ENCODE measurements at regions of chr9 and their contacts with region 1.

Region 1: GRCh38 chr9:21677834-21678233 is 124.6 kb upstream of the MTAP start:
- DNase-seq: peak; percentile 99
- ATAC-seq: peak; percentile 76
- H3K4me3 ChIP-seq: no peak overlapping the region
- H3K27ac ChIP-seq: peak overlapping the region; percentile 99
- H3K4me1 ChIP-seq: peaks cover 90 to 99% of the 10 kb centered on the region in 2 experiments
- H3K27me3 ChIP-seq: no peaks in the 10 kb centered on the region
- CTCF ChIP-seq: 0 out of 6 replicates have a peak, but pooled peaks of 1 of the 3 experiments have one; percentile 4
- POLR2A ChIP-seq: no peak
- RAD21 ChIP-seq: peak; percentile 48

Region 2: DNA sequence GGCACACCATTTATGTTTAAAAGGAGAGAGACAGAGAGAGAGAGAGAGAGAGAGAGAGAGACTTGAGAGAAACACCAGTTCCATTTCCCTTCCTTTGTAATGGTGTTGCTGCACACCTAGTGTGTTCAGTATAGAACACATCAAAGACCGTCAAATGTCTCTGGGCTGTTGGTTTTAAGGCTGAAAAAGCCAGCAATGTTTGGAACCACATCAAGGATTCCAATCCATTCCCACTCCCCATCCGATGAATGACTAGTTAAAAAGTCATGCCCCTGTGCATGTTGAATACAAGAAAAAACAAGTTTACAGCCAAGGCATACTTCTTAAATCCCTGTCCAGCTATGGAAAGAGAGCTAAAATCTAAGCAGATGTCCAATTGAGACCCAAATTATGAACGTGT is 112.7 kb before region 1 on chr9:
- CTCF ChIA-PET with region 1: no interaction called
- POLR2A ChIA-PET with region 1: interaction called, 64 read pairs
- RAD21 ChIA-PET with region 1: no interaction called
- intact Hi-C with region 1: no loop called
- DNase-seq: peak; percentile 81
- ATAC-seq: peak; percentile 69
- H3K4me3 ChIP-seq: peak overlapping the region in 1 of 2 experiments; percentile 21; a peak in 2 of 4 replicates
- H3K27ac ChIP-seq: peak overlapping the region; percentile 99
- H3K4me1 ChIP-seq: peaks cover 95 to 98% of the 10 kb centered on the region in 2 experiments
- H3K27me3 ChIP-seq: no peaks in the 10 kb centered on the region
- CTCF ChIP-seq: no peak
- POLR2A ChIP-seq: no peak
- RAD21 ChIP-seq: no peak

Region 3: DNA sequence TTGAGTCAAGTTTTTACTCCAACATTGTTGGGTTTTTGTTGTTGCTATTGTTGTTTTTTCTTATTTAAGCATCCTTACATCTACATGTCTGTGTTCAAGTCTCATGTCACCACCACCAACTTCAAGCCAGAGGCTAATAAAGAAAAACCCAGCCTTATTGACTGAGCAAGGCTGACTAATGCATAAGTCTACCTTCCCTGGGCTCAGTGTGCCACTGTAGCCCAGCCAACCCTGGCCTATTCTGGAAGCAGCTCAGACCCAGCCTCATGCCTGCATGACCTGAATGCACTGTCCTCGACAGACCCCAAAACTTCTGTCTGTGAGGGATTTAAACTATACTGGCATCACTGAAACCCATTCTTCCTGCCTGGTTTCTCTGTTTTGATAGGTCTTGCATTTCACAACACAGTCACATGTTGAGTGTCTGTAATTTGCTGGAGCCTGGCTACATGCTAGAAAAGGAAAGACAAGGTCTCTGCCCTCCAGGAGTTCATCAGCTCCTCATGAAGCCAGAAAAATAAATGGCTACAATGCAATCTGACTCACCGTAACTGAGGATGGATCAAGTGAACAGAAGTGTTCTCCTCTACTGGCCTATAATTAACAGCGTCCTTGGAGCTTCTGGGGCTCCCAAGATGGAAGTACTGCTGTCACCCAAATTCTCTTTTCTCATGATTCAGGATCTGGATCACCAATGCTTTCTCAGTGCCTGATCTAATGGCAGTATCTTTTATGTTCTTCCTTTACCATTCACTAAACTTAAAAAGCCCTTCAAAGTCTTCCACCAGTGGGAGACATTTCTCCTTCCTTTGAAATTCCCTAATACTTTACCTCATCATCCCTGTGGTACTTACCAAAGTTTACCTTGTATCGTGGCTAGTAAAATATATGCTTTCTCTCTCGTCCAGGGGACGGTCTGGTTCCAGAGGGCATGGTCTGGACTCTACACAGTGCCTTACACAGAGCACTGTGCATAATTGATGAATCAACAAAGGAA is 91.8 kb before region 1 on chr9:
- CTCF ChIA-PET with region 1: no interaction called
- POLR2A ChIA-PET with region 1: interaction called, 154 read pairs
- RAD21 ChIA-PET with region 1: no interaction called
- intact Hi-C with region 1: loop called (anchors 2 kb)
- DNase-seq: no peak
- ATAC-seq: 0 out of 2 replicates have a peak, but pooled peaks have one; percentile 9
- H3K4me3 ChIP-seq: no peak overlapping the region
- H3K27ac ChIP-seq: peak overlapping the region; percentile 99
- H3K4me1 ChIP-seq: peaks cover 88 to 99% of the 10 kb centered on the region in 2 experiments
- H3K27me3 ChIP-seq: no peaks in the 10 kb centered on the region
- CTCF ChIP-seq: peak in 1 of 3 experiments; percentile 40; a peak in 2 of 6 replicates
- POLR2A ChIP-seq: no peak
- RAD21 ChIP-seq: 0 out of 2 replicates have a peak, but pooled peaks have one; percentile 25

Region 4: GRCh38 chr9:21615446-21615845 is 62.4 kb before region 1 on chr9:
- CTCF ChIA-PET with region 1: no interaction called
- POLR2A ChIA-PET with region 1: interaction called, 4 read pairs
- RAD21 ChIA-PET with region 1: no interaction called
- intact Hi-C with region 1: loop called (anchors 2 kb)
- DNase-seq: no peak
- ATAC-seq: peak; percentile 3; the same call in 1 of the 2 replicates
- H3K4me3 ChIP-seq: peak overlapping the region in 1 of 2 experiments; percentile 29; a peak in 2 of 4 replicates
- H3K27ac ChIP-seq: peak overlapping the region; percentile 97
- H3K4me1 ChIP-seq: peaks cover 82 to 97% of the 10 kb centered on the region in 2 experiments
- H3K27me3 ChIP-seq: no peaks in the 10 kb centered on the region
- CTCF ChIP-seq: no peak
- POLR2A ChIP-seq: no peak
- RAD21 ChIP-seq: 0 out of 2 replicates have a peak, but pooled peaks have one; percentile 2

Region 5: DNA sequence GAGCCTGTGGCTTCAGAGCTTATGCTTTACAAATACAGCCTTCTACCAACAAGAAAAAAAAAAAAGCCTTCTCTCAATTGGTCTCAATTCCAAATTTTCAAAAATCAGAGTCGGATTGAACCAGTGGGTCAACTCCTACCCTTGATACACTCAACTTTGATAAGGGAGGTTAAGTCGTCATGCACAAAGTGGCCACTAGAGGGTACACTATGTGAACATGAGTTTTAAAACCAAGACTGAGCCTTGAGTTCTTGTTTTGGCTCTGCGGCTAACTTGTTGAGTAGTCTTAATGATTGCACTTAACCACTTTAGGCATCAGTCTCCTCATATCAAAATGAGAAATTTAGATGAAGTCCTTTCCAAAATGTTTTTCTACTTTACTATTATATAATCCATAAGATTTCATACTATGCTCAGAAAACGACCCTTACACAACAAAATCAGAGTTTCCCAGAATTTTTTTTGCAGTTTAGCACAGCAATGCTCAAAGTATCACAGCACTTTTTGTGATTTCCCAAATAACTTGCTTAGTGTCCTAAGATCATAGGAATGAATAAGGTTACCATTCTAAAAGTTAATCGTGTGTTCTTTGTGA is 31.7 kb after region 1 on chr9:
- CTCF ChIA-PET with region 1: no interaction called
- POLR2A ChIA-PET with region 1: interaction called, 28 read pairs
- RAD21 ChIA-PET with region 1: no interaction called
- intact Hi-C with region 1: no loop called
- DNase-seq: peak; percentile 80
- ATAC-seq: peak; percentile 49
- H3K4me3 ChIP-seq: no peak overlapping the region
- H3K27ac ChIP-seq: peak overlapping the region; percentile 95
- H3K4me1 ChIP-seq: peaks cover 73 to 78% of the 10 kb centered on the region in 2 experiments
- H3K27me3 ChIP-seq: no peaks in the 10 kb centered on the region
- CTCF ChIP-seq: peak; percentile 69 to 92 (median 74)
- POLR2A ChIP-seq: no peak
- RAD21 ChIP-seq: peak; percentile 74

Region 6: DNA sequence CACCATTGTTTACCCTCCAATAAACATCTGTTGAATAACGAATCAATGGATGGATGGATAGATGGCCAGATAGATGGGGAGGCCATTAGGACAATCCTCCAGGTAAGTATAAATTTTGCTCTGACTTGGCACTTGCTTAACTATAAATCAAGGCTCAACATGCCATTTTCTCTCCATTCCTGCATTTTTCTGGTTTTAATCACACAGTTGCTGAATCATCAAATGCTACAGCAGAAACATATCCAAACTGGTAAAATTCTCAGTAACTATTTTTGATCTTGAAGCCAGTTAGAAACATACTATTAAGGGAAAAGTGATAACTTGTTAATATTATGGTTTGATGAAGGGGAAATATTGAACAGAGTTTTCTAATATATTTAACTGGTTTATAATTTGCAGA is 53.1 kb after region 1 on chr9:
- CTCF ChIA-PET with region 1: no interaction called
- POLR2A ChIA-PET with region 1: no interaction called
- RAD21 ChIA-PET with region 1: no interaction called
- intact Hi-C with region 1: no loop called
- DNase-seq: no peak
- ATAC-seq: no peak
- H3K4me3 ChIP-seq: no peak overlapping the region
- H3K27ac ChIP-seq: no peak overlapping the region
- H3K4me1 ChIP-seq: peaks cover 11 to 17% of the 10 kb centered on the region in 2 experiments; a peak in 3 of 4 replicates
- H3K27me3 ChIP-seq: no peaks in the 10 kb centered on the region
- CTCF ChIP-seq: no peak
- POLR2A ChIP-seq: no peak
- RAD21 ChIP-seq: no peak

Region 7: DNA sequence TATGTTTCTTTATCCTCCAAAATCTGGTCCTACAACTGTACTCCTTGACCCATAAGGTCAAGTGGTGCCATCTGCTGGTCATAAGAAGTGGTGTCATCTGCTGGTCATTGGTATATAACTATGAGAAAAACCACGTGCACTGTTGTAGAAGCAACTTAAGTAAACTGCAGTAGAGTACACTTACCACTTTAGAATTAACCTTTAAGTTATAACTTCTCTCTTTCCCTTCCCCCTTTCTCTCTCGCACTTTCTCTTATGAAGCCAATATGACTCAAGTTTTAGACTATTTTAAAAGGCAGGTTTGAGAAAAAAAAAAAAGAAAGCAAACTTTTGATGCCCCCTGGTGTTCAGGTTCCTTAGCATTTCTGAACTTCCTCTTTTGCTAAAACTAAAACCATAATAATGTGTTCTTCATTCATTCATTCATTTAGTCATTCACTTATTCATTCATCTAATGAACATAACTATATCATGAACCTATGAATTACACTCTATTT is 111.8 kb after region 1 on chr9:
- CTCF ChIA-PET with region 1: interaction called, 7 read pairs
- POLR2A ChIA-PET with region 1: interaction called, 71 read pairs
- RAD21 ChIA-PET with region 1: interaction called in 1 of 2 experiments, 3 read pairs
- intact Hi-C with region 1: loop called (anchors 2 kb)
- DNase-seq: peak; percentile 92
- ATAC-seq: peak; percentile 76
- H3K4me3 ChIP-seq: no peak overlapping the region
- H3K27ac ChIP-seq: peak overlapping the region; percentile 97
- H3K4me1 ChIP-seq: peaks cover 28 to 57% of the 10 kb centered on the region in 2 experiments
- H3K27me3 ChIP-seq: no peaks in the 10 kb centered on the region
- CTCF ChIP-seq: peak; percentile 50 to 96 (median 85)
- POLR2A ChIP-seq: no peak
- RAD21 ChIP-seq: peak; percentile 91